ENCODE measurements at regions of chr1 and their contacts with region 1.

Region 1: DNA sequence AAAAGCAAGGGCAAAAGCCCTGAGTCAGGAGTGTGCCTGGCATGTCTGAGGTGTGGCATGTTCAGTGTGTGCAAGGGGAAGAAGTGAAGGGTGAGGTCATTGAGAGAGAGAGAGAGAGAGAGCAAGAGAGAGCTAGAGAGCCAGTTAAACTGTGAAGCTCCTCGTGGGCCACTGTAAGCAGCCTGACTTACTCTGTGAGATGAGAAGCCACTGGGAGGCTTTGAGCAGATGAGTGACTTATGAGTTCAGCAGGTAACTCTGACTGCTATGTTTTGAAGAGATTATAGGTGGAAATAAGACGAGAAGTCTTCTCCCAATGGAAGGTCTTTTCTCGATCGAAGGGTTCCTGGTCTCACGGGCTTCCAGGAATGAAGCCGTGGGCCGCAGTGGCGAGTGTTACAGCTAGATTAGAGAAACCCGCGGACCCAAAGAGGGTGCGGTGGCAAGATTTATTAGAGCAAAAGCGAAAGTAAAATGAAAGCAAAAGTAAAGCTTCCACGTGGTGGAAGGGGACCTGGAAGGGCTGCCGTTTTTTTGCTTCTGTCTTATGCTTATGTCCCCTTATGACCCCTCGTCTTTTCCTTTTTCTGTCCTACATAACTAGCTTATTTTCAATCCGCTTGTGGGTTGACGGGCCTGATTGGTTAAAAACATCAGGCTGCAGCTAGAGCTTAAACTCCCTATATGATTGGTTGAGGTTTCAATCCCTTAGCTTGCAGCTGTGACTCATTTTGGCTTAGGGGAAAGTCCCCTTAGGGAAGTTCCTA is 323.1 kb upstream of the FAM78B start:
- DNase-seq: peak; percentile 48 to 92 (median 70)
- ATAC-seq: peak; percentile 88
- H3K4me3 ChIP-seq: peak overlapping the region; percentile 42
- H3K27ac ChIP-seq: peak overlapping the region; percentile 92
- H3K4me1 ChIP-seq: peaks cover 8 to 49% of the 10 kb centered on the region in 2 experiments; a peak in 4 of 5 replicates
- H3K27me3 ChIP-seq: no peaks in the 10 kb centered on the region
- CTCF ChIP-seq: no peak
- EP300 ChIP-seq: peak; percentile 69; the same call in 1 of the 2 replicates
- POLR2A ChIP-seq: peak; percentile 73
- RAD21 ChIP-seq: peak; percentile 7 to 37; a peak in 1 of 4 replicates

Region 2: DNA sequence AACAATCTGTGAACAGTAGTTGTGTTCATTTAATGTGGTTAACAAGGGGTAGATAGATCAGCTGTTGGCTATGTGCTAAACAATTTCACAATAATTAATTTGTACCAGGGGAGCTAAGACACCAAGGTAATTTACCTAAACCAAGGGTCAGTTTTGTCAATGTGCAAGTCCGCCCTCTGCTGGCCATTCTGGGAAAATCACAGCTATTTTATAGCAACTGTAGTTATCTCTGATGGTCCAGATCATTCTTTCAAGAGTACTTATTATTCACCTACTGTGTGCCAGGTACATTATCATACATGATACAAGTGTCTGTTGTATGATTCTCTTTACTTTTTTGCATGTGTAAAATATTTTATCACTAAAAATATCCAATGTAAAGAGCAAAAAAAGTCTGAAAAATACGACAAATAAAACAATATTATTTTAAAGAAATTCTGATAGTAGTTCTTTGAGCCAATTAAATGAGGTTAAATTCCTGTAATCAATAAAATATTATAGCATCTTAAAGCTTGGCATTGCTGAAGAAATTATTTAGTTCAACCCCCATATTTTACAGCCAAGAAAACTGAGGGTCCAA is 10.7 kb before region 1 on chr1:
- CTCF ChIA-PET with region 1: no interaction called
- POLR2A ChIA-PET with region 1: interaction called, 20 read pairs
- in situ Hi-C with region 1: no loop called
- intact Hi-C with region 1: no loop called
- DNase-seq: peak; percentile 54 to 80 (median 64)
- ATAC-seq: peak; percentile 81
- H3K4me3 ChIP-seq: no peak overlapping the region
- H3K27ac ChIP-seq: no peak overlapping the region
- H3K4me1 ChIP-seq: peaks cover 0 to 7% of the 10 kb centered on the region in 2 experiments; a peak in 4 of 5 replicates
- H3K27me3 ChIP-seq: no peaks in the 10 kb centered on the region
- CTCF ChIP-seq: peak; percentile 68 to 78 (median 75)
- EP300 ChIP-seq: no peak
- POLR2A ChIP-seq: no peak
- RAD21 ChIP-seq: peak; percentile 65 to 78

Region 3: GRCh38 chr1:166552706-166553105 is 62.9 kb after region 1 on chr1:
- CTCF ChIA-PET with region 1: no interaction called
- POLR2A ChIA-PET with region 1: no interaction called
- in situ Hi-C with region 1: no loop called
- intact Hi-C with region 1: no loop called
- DNase-seq: no peak
- ATAC-seq: no peak
- H3K4me3 ChIP-seq: no peak overlapping the region
- H3K27ac ChIP-seq: no peak overlapping the region
- H3K4me1 ChIP-seq: no peaks in the 10 kb centered on the region
- H3K27me3 ChIP-seq: no peaks in the 10 kb centered on the region
- CTCF ChIP-seq: no peak
- EP300 ChIP-seq: no peak
- POLR2A ChIP-seq: no peak
- RAD21 ChIP-seq: no peak

Region 4: DNA sequence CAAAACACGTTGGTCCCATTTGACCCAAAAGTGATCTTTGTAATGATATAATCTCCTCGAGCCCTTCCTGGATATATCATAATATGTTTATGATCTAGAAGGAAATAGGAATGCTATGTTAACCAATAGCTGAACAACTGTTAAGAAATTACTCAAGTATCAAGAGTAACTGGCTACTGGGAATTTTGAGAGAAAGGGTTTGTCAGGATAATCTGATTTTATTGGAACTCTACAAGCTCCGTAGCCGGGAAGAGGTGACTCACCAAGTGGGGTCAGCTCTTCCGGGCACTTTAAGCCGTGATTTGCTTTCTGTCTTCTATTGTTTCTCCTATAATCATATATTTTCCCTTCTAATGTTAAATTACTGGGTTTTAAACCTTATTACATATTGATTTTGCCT is 98.9 kb after region 1 on chr1:
- CTCF ChIA-PET with region 1: no interaction called
- POLR2A ChIA-PET with region 1: no interaction called
- in situ Hi-C with region 1: no loop called
- intact Hi-C with region 1: loop called (anchors 5 kb)
- DNase-seq: no peak
- ATAC-seq: no peak
- H3K4me3 ChIP-seq: no peak overlapping the region
- H3K27ac ChIP-seq: no peak overlapping the region
- H3K4me1 ChIP-seq: peaks cover 9 to 25% of the 10 kb centered on the region in 2 experiments
- H3K27me3 ChIP-seq: no peaks in the 10 kb centered on the region
- CTCF ChIP-seq: no peak
- EP300 ChIP-seq: no peak
- POLR2A ChIP-seq: no peak
- RAD21 ChIP-seq: no peak

Measured in K562 (cell line).